OCI-LY7 (cell line): ENCODE measurements at regions of chrX and their contacts with region 1.

Region 1: GRCh38 chrX:46758906-46759644 is at the start of gene SLC9A7:
- DNase-seq: peak; percentile 85
- H3K4me3 ChIP-seq: peak within 1 kb of the TSS; percentile 97
- H3K27ac ChIP-seq: peak within 1 kb of the TSS; percentile 99
- H3K4me1 ChIP-seq: peaks cover 39% of the 10 kb centered on the region
- CTCF ChIP-seq: peak; percentile 68
- total RNA-seq, gene SLC9A7: 34.2 and 40.5 TPM in 2 replicates

Region 2: DNA sequence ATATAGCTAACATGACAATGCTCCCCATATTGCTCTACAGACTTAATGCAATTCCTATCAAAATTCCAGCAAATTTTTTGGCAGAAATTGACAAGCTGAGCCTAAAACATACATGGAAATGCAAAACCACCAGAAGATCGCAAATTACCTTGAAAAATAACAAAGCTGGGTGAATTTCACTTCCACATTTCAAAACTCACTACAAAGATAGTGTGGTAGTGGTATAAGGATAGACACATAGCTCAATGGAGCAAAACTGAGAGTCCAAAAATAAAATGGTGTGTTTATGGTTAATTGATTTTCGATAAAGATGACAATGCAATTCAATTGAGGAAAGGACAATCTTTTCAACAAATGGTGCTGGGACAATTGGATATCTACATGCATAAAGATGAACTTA is 65.9 kb before region 1 on chrX:
- CTCF ChIA-PET with region 1: no interaction called
- POLR2A ChIA-PET with region 1: no interaction called
- intact Hi-C with region 1: loop called (anchors 5 kb)
- DNase-seq: peak; percentile 51
- H3K4me3 ChIP-seq: peak overlapping the region; percentile 41
- H3K27ac ChIP-seq: peak overlapping the region; percentile 54
- H3K4me1 ChIP-seq: peaks cover 47% of the 10 kb centered on the region
- CTCF ChIP-seq: no peak

Region 3: GRCh38 chrX:46796574-46797191 is 37.6 kb after region 1 on chrX:
- CTCF ChIA-PET with region 1: no interaction called
- POLR2A ChIA-PET with region 1: interaction called, 4 read pairs
- intact Hi-C with region 1: loop called (anchors 1 kb)
- DNase-seq: peak; percentile 70
- H3K4me3 ChIP-seq: no peak overlapping the region
- H3K27ac ChIP-seq: no peak overlapping the region
- H3K4me1 ChIP-seq: peaks cover 13% of the 10 kb centered on the region
- CTCF ChIP-seq: peak; percentile 82

Region 4: DNA sequence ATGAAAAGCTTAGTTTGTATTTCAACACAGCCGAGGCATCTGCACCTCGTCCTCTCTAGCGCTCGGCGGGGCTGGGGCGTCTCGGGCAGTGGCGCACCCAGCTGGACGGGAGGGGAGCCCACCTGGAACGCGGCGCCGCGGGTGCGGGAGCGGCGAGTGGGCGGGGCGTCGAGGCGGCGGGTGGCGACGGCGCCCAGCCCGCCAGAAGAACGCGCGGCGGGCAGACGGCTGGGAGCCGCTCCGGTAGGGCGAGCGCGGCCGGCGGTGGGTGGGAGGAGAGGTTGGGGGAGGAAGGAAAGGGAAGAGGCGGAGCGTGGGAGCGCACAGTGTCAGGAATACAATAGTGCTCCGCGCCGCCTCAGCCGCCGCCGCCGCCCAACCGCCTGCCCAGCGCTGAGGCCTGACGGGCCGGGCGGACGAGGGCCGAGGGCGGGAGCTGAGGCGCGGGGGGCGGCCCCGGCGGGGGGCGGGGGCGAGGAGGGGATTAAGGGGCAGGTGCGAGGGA is 153.1 kb after region 1 on chrX and contains the start of gene JADE3:
- CTCF ChIA-PET with region 1: no interaction called
- POLR2A ChIA-PET with region 1: no interaction called
- intact Hi-C with region 1: loop called (anchors 2 kb)
- DNase-seq: peak; percentile 71
- H3K4me3 ChIP-seq: peak within 1 kb of the TSS; percentile 75
- H3K27ac ChIP-seq: no peak within 1 kb of the TSS
- H3K4me1 ChIP-seq: peaks cover 7% of the 10 kb centered on the region
- CTCF ChIP-seq: peak; percentile 25; the same call in 1 of the 2 replicates
- total RNA-seq, gene JADE3: 6.1 and 6.5 TPM in 2 replicates

Region 5: GRCh38 chrX:47030339-47030738 is 271.3 kb after region 1 on chrX:
- CTCF ChIA-PET with region 1: no interaction called
- POLR2A ChIA-PET with region 1: no interaction called
- intact Hi-C with region 1: loop called (anchors 2 kb)
- DNase-seq: peak; percentile 73
- H3K4me3 ChIP-seq: no peak overlapping the region
- H3K27ac ChIP-seq: no peak overlapping the region
- H3K4me1 ChIP-seq: peaks cover 6% of the 10 kb centered on the region
- CTCF ChIP-seq: peak; percentile 82